AG04450 (cell line): ENCODE measurements at regions of chr20 and their contacts with region 1.

Region 1: GRCh38 chr20:44310664-44311639 is at the start of gene FITM2:
- DNase-seq: peak; percentile 95
- H3K4me3 ChIP-seq: peak within 1 kb of the TSS; percentile 99
- H3K27ac ChIP-seq: peak within 1 kb of the TSS; percentile 31
- H3K27me3 ChIP-seq: no peaks in the 10 kb centered on the region
- CTCF ChIP-seq: peak; percentile 93
- polyA plus RNA-seq, gene FITM2: 4.1 and 4.4 TPM in 2 replicates

Region 2: GRCh38 chr20:44282192-44282591 is 28.8 kb before region 1 on chr20:
- CTCF ChIA-PET with region 1: interaction called, 10 read pairs
- POLR2A ChIA-PET with region 1: no interaction called
- DNase-seq: no peak
- H3K4me3 ChIP-seq: no peak overlapping the region
- H3K27ac ChIP-seq: no peak overlapping the region
- H3K27me3 ChIP-seq: no peaks in the 10 kb centered on the region
- CTCF ChIP-seq: no peak

Region 3: DNA sequence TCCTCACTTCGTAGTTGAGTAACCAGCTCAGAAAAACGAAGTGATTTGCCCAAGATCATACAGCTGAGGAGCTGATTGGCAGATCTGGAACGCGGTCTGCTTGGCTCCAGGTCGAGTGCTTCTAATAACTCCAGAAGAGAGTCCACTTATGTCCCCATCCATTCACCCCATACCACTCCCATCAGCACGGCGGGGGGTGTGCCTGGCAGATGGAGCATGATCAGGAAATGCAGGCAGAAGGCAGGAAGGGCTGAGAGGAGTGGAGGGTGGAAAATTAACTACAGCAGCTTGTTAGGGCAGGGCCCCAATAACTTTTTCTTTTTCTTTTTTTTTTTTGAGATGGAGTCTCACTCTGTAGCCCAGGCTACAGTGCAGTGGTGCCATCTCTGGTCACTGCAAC is 14.9 kb before region 1 on chr20:
- CTCF ChIA-PET with region 1: interaction called, 16 read pairs
- POLR2A ChIA-PET with region 1: no interaction called
- DNase-seq: no peak
- H3K4me3 ChIP-seq: no peak overlapping the region
- H3K27ac ChIP-seq: no peak overlapping the region
- H3K27me3 ChIP-seq: no peaks in the 10 kb centered on the region
- CTCF ChIP-seq: no peak

Region 4: GRCh38 chr20:44326391-44327159 is 15.6 kb after region 1 on chr20:
- CTCF ChIA-PET with region 1: interaction called, 38 read pairs
- POLR2A ChIA-PET with region 1: no interaction called
- DNase-seq: no peak
- H3K4me3 ChIP-seq: peak overlapping the region; percentile 29; the same call in 1 of the 2 replicates
- H3K27ac ChIP-seq: no peak overlapping the region
- H3K27me3 ChIP-seq: peaks cover 9% of the 10 kb centered on the region
- CTCF ChIP-seq: no peak